Calu3 (cell line): ENCODE measurements at regions of chr17 and their contacts with region 1.

Region 1: GRCh38 chr17:36601303-36602029 is at the start of gene MRM1:
- DNase-seq: peak; percentile 100
- H3K4me3 Mint-ChIP-seq: peak within 1 kb of the TSS; percentile 81
- H3K27ac Mint-ChIP-seq: peak within 1 kb of the TSS; percentile 84
- H3K4me1 Mint-ChIP-seq: peaks cover 34% of the 10 kb centered on the region
- H3K27me3 Mint-ChIP-seq: no peaks in the 10 kb centered on the region
- CTCF ChIP-seq: peak; percentile 17
- total RNA-seq, gene MRM1: 42.4 and 43.5 TPM in 2 replicates

Region 2: DNA sequence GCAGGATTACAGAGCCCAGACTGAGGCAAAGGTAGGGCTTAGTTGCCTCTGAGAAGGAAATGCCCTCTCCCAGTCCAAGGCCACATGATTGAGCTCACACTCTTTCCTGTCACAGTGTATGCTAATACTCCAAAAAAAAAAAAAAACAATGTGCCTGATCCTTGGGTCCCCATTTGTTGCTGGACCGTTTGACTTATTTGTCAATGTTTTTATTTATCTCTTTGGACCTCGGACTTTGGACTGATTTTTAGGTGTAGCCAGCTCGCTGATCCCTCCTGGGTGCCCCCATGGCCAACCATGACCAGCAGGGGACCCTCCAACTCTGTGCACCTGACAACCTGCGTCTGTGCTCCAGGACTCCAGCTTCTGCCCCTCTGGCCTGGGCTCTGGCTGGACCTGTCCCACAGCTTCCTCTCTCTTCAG is 619.5 kb before region 1 on chr17:
- CTCF ChIA-PET with region 1: no interaction called
- intact Hi-C with region 1: no loop called
- DNase-seq: peak; percentile 46
- H3K4me3 Mint-ChIP-seq: no peak overlapping the region
- H3K27ac Mint-ChIP-seq: no peak overlapping the region
- H3K4me1 Mint-ChIP-seq: no peaks in the 10 kb centered on the region
- H3K27me3 Mint-ChIP-seq: peaks cover 94% of the 10 kb centered on the region
- CTCF ChIP-seq: no peak

Region 3: GRCh38 chr17:36523113-36523512 is 78.4 kb before region 1 on chr17:
- CTCF ChIA-PET with region 1: no interaction called
- intact Hi-C with region 1: no loop called
- DNase-seq: no peak
- H3K4me3 Mint-ChIP-seq: no peak overlapping the region
- H3K27ac Mint-ChIP-seq: no peak overlapping the region
- H3K4me1 Mint-ChIP-seq: peaks cover 15% of the 10 kb centered on the region
- H3K27me3 Mint-ChIP-seq: no peaks in the 10 kb centered on the region
- CTCF ChIP-seq: no peak

Region 4: GRCh38 chr17:36545465-36546417 is 55.7 kb before region 1 on chr17:
- CTCF ChIA-PET with region 1: interaction called, 47 read pairs
- intact Hi-C with region 1: no loop called
- DNase-seq: peak; percentile 100
- H3K4me3 Mint-ChIP-seq: peak overlapping the region; percentile 97
- H3K27ac Mint-ChIP-seq: peak overlapping the region; percentile 95
- H3K4me1 Mint-ChIP-seq: peaks cover 32% of the 10 kb centered on the region
- H3K27me3 Mint-ChIP-seq: no peaks in the 10 kb centered on the region
- CTCF ChIP-seq: peak; percentile 31

Region 5: GRCh38 chr17:36583787-36584186 is 17.7 kb before region 1 on chr17:
- CTCF ChIA-PET with region 1: interaction called, 69 read pairs
- intact Hi-C with region 1: no loop called
- DNase-seq: no peak
- H3K4me3 Mint-ChIP-seq: no peak overlapping the region
- H3K27ac Mint-ChIP-seq: no peak overlapping the region
- H3K4me1 Mint-ChIP-seq: no peaks in the 10 kb centered on the region
- H3K27me3 Mint-ChIP-seq: no peaks in the 10 kb centered on the region
- CTCF ChIP-seq: no peak

Region 6: DNA sequence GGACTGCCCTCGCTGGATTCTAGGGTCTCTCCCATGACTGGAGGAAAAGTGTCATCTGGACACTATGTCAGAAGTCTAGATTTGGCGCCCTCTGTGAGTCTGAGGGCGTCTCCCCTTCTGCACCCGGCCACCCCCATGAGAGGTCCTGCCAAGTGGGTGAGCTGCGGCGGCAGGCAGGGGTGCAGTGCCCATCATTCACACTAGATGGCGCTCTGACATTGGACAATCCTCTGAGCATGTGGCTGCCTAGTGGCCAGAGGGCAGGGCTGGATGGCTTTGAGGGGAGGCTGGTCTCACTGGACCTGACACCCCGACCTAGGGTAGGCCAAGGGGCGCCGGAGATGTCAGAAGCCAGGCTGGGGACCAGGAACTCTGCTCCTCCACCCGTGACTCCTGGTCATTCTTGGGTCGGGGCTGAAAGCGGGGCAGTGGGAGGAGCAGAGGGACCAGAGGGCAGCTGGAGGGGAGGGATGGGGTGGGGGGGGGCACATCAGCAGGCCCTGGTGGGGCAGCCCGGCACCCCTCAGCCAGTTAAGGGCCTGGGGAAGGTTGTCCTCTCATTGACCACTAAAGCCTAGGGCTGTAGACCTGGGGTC is 27.9 kb after region 1 on chr17:
- CTCF ChIA-PET with region 1: interaction called, 30 read pairs
- intact Hi-C with region 1: no loop called
- DNase-seq: peak; percentile 99
- H3K4me3 Mint-ChIP-seq: no peak overlapping the region
- H3K27ac Mint-ChIP-seq: no peak overlapping the region
- H3K4me1 Mint-ChIP-seq: no peaks in the 10 kb centered on the region
- H3K27me3 Mint-ChIP-seq: peaks cover 53% of the 10 kb centered on the region
- CTCF ChIP-seq: peak; percentile 100

Region 7: GRCh38 chr17:36715951-36716350 is 114.5 kb after region 1 on chr17:
- CTCF ChIA-PET with region 1: no interaction called
- intact Hi-C with region 1: no loop called
- DNase-seq: no peak
- H3K4me3 Mint-ChIP-seq: no peak overlapping the region
- H3K27ac Mint-ChIP-seq: no peak overlapping the region
- H3K4me1 Mint-ChIP-seq: no peaks in the 10 kb centered on the region
- H3K27me3 Mint-ChIP-seq: peaks cover 76% of the 10 kb centered on the region
- CTCF ChIP-seq: no peak

Region 8: DNA sequence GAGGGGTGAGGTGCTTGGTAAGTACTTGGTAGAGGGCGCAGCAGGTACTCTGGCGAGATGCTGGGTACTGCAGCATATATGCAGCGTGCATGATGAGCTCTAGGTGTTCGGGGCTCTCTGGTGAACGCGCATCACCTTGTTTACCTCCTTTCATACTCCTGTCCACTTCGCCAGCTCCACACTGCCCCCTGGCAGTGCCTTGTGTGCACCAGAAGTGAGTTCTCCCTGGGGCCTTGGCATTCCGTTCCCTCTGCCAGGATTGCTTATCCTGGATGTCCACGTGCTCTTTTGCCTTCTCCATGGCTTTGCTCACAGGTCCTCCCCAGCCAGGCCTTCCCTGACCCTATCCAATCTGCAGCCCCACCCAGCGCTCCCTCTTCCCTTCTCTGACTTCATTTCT is 154.1 kb after region 1 on chr17:
- CTCF ChIA-PET with region 1: interaction called, 13 read pairs
- intact Hi-C with region 1: no loop called
- DNase-seq: peak; percentile 84
- H3K4me3 Mint-ChIP-seq: no peak overlapping the region
- H3K27ac Mint-ChIP-seq: no peak overlapping the region
- H3K4me1 Mint-ChIP-seq: no peaks in the 10 kb centered on the region
- H3K27me3 Mint-ChIP-seq: peaks cover 77% of the 10 kb centered on the region
- CTCF ChIP-seq: peak; percentile 93

Region 9: GRCh38 chr17:37067555-37068111 is 466.2 kb after region 1 on chr17:
- CTCF ChIA-PET with region 1: interaction called, 13 read pairs
- intact Hi-C with region 1: no loop called
- DNase-seq: peak; percentile 94
- H3K4me3 Mint-ChIP-seq: peak overlapping the region; percentile 38
- H3K27ac Mint-ChIP-seq: peak overlapping the region; percentile 12
- H3K4me1 Mint-ChIP-seq: peaks cover 19% of the 10 kb centered on the region
- H3K27me3 Mint-ChIP-seq: peaks cover 47% of the 10 kb centered on the region
- CTCF ChIP-seq: no peak

Region 10: GRCh38 chr17:37373530-37374159 is 772.2 kb after region 1 on chr17:
- CTCF ChIA-PET with region 1: interaction called, 28 read pairs
- intact Hi-C with region 1: no loop called
- DNase-seq: peak; percentile 95
- H3K4me3 Mint-ChIP-seq: no peak overlapping the region
- H3K27ac Mint-ChIP-seq: no peak overlapping the region
- H3K4me1 Mint-ChIP-seq: peaks cover 9% of the 10 kb centered on the region
- H3K27me3 Mint-ChIP-seq: no peaks in the 10 kb centered on the region
- CTCF ChIP-seq: peak; percentile 100